Psoas muscle (tissue), 8 donors: ENCODE measurements at regions of chr12 and their contacts with region 1.

Region 1: GRCh38 chr12:94435511-94435927 is 24.1 kb downstream of the CEP83 start:
- DNase-seq: no peak
- ATAC-seq: peak; percentile 30 to 46 (median 44)
- H3K4me3 ChIP-seq: no peak overlapping the region
- H3K27ac ChIP-seq: no peak overlapping the region
- H3K4me1 ChIP-seq: peaks cover 20% of the 10 kb centered on the region
- H3K27me3 ChIP-seq: no peaks in the 10 kb centered on the region
- CTCF ChIP-seq: no peak

Region 2: DNA sequence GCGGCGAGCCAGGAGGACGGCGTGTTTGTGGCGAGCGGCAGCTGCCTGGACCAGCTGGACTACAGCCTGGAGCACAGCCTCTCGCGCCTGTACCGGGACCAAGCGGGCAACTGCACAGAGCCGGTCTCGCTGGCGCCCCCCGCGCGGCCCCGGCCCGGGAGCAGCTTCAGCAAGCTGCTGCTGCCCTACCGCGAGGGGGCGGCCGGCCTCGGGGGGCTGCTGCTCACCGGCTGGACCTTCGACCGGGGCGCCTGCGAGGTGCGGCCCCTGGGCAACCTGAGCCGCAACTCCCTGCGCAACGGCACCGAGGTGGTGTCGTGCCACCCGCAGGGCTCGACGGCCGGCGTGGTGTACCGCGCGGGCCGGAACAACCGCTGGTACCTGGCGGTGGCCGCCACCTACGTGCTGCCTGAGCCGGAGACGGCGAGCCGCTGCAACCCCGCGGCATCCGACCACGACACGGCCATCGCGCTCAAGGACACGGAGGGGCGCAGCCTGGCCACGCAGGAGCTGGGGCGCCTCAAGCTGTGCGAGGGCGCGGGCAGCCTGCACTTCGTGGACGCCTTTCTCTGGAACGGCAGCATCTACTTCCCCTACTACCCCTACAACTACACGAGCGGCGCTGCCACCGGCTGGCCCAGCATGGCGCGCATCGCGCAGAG is 286.3 kb before region 1 on chr12:
- intact Hi-C with region 1: loop called in 1 of 2 experiments (anchors 10 kb)
- DNase-seq: peak in 1 of 2 donors; percentile 41
- ATAC-seq: peak; percentile 40 to 67 (median 64)
- H3K4me3 ChIP-seq: peak overlapping the region; percentile 69
- H3K27ac ChIP-seq: no peak overlapping the region
- H3K4me1 ChIP-seq: no peaks in the 10 kb centered on the region
- H3K27me3 ChIP-seq: peaks cover 0 to 51% (median 13%) of the 10 kb centered on the region in 3 donors
- CTCF ChIP-seq: peak; percentile 19

Region 3: GRCh38 chr12:94379479-94380113 is 55.9 kb before region 1 on chr12:
- intact Hi-C with region 1: no loop called
- DNase-seq: no peak
- ATAC-seq: no peak
- H3K4me3 ChIP-seq: no peak overlapping the region
- H3K27ac ChIP-seq: no peak overlapping the region
- H3K4me1 ChIP-seq: peaks cover 8% of the 10 kb centered on the region
- H3K27me3 ChIP-seq: no peaks in the 10 kb centered on the region
- CTCF ChIP-seq: no peak

Region 4: GRCh38 chr12:94740601-94741362 is 305.3 kb after region 1 on chr12:
- intact Hi-C with region 1: no loop called
- DNase-seq: no peak
- ATAC-seq: no peak
- H3K4me3 ChIP-seq: no peak overlapping the region
- H3K27ac ChIP-seq: no peak overlapping the region
- H3K4me1 ChIP-seq: no peaks in the 10 kb centered on the region
- H3K27me3 ChIP-seq: no peaks in the 10 kb centered on the region
- CTCF ChIP-seq: no peak